CD4-positive, alpha-beta memory T cell (primary cell): ENCODE measurements at regions of chr3 and their contacts with region 1.

Region 1: DNA sequence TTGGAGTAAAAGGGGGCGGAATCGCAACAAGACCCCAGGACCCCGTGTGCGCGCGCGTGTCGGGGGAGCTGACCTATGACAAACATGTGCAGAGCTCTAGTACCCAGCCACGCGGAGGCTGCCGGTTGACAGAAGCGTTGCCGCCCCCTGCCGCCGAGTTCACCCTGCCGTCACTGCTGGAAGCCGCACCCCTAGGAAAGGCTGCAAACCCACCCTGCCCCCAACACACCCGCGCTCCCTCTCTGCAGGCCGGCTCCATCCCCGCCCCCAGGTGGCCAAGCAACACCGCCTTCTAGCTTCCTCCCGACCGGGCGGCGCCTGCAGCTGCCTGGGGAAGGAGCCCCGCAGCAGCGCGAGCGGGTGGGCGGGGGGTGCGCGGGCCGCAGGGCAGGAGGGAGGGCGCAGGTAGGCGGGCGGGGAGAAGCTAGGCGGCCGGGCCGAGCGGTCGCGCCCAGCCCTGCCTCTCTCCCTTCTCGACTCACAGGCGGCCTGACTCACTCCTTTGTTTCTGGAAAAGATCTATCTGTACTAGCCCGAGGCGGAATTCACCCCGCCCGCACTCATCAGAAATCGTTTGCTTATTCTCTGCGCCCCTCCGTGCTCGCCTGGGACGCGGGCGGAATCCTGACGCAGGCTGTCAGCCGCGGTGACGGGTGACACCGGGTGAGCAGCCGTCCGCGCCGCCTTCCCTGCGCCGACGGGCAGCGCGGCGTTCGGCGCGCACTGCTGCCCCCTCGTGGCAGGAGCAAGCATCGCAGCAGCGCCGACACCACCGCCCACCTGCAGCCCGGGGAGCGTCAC is 160.8 kb downstream of the GAP43 start:
- DNase-seq: peak; percentile 91 to 96 (median 93)
- H3K4me3 ChIP-seq: peak overlapping the region in 1 of 2 donors; percentile 81
- H3K4me3 Mint-ChIP-seq: peak overlapping the region; percentile 78 to 96 (median 93)
- H3K27ac ChIP-seq: peak overlapping the region; percentile 90
- H3K27ac Mint-ChIP-seq: peak overlapping the region; percentile 76 to 99 (median 98)
- H3K4me1 ChIP-seq: peaks cover 13% of the 10 kb centered on the region
- H3K4me1 Mint-ChIP-seq: peaks cover 10 to 19% (median 10%) of the 10 kb centered on the region in 4 donors
- H3K27me3 ChIP-seq: no peaks in the 10 kb centered on the region
- H3K27me3 Mint-ChIP-seq: no peaks in the 10 kb centered on the region

Region 2: GRCh38 chr3:114056130-114057010 is 1727.8 kb before region 1 on chr3 and contains the starts of genes CCDC191 and QTRT2:
- CTCF ChIA-PET with region 1: no interaction called
- POLR2A ChIA-PET with region 1: interaction called, 3 read pairs
- intact Hi-C with region 1: loop called (anchors 10 kb)
- DNase-seq: peak; percentile 97 to 99 (median 98)
- H3K4me3 ChIP-seq: peak within 1 kb of the TSS; percentile 78 to 93
- H3K4me3 Mint-ChIP-seq: peak within 1 kb of the TSS; percentile 95 to 100 (median 99)
- H3K27ac ChIP-seq: peak within 1 kb of the TSS; percentile 86
- H3K27ac Mint-ChIP-seq: peak within 1 kb of the TSS; percentile 93 to 100 (median 99)
- H3K4me1 ChIP-seq: peaks cover 26% of the 10 kb centered on the region
- H3K4me1 Mint-ChIP-seq: peaks cover 21 to 57% (median 38%) of the 10 kb centered on the region in 4 donors
- H3K27me3 ChIP-seq: no peaks in the 10 kb centered on the region
- H3K27me3 Mint-ChIP-seq: peaks cover 0 to 2% of the 10 kb centered on the region in 2 donors
- total RNA-seq, gene CCDC191: 5.7 to 7.1 TPM
- total RNA-seq, gene QTRT2: 29.4 to 35.7 TPM

Region 3: DNA sequence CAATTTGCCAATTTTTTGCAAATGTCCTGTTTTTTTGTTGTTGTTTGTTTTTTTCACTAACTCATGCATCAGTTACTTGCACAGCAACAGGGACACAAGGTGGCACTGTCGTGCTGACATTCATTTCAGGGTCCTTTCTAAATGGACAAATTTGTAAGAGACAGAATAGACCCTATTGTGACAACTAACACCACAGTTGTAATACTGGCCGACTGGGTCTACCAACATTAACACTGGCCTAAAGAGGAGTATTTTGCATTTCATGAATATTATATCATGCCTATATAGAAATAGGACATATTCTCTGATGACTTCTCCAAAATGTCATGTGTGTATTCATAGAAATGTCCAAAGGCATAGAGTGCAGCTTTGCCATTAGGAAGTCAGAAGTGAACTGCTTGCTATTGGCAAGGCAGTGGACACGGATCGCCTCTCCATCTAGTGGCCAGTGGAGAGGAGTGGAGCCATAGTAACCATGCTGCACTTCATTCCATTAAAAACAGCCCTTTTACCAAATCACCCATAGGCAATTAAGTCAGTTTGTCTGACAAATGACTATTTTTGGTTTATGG is 691.8 kb before region 1 on chr3:
- CTCF ChIA-PET with region 1: interaction called, 9 read pairs
- POLR2A ChIA-PET with region 1: no interaction called
- intact Hi-C with region 1: loop called (anchors 1 kb)
- DNase-seq: peak; percentile 43 to 62 (median 48)
- H3K4me3 ChIP-seq: no peak overlapping the region
- H3K4me3 Mint-ChIP-seq: no peak overlapping the region
- H3K27ac ChIP-seq: no peak overlapping the region
- H3K27ac Mint-ChIP-seq: no peak overlapping the region
- H3K4me1 ChIP-seq: peaks cover 4% of the 10 kb centered on the region
- H3K4me1 Mint-ChIP-seq: peaks cover 12 to 20% (median 16%) of the 10 kb centered on the region in 4 donors
- H3K27me3 ChIP-seq: no peaks in the 10 kb centered on the region
- H3K27me3 Mint-ChIP-seq: no peaks in the 10 kb centered on the region

Region 4: DNA sequence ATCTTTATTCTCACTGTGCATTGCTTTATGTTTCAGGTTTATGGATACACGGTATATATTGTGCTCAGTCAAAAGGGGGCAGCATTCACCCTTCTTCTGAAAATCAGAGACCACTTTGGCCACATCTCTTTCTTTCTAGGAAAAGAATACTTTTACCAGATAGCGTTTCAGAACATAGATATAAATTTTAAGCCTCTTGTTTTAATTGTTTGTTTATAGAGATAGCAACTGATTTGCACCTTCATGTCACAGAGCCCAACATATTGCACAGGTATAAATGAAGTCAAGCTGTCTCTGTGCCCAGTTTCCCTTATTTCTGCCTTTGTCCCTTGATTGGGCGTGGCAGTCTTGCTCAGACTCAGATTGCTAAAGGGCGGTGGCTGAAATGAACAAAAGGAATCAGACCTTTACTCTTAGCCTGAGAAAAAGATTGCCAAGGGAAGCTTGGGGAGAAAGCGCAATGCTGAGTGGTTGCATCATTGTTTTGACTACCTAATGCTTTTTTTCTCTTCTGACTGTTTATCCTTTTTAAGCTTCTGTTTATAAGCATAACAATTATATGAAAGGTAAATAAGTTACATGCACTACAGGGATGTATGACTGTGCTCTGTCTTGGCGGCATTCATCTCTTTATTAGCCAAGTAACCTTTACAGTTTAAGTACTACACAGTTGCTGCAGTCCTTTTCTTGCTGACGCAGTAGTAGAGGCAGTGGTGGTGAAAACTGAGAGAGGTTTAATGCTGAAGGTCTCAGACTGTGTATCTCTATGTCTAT is 566.3 kb before region 1 on chr3:
- CTCF ChIA-PET with region 1: interaction called, 11 read pairs
- POLR2A ChIA-PET with region 1: no interaction called
- intact Hi-C with region 1: loop called (anchors 1 kb)
- DNase-seq: peak in 4 of 5 donors; percentile 5 to 21 (median 13)
- H3K4me3 ChIP-seq: no peak overlapping the region
- H3K4me3 Mint-ChIP-seq: no peak overlapping the region
- H3K27ac ChIP-seq: no peak overlapping the region
- H3K27ac Mint-ChIP-seq: peak overlapping the region in 1 of 7 donors; percentile 15
- H3K4me1 ChIP-seq: no peaks in the 10 kb centered on the region
- H3K4me1 Mint-ChIP-seq: no peaks in the 10 kb centered on the region
- H3K27me3 ChIP-seq: no peaks in the 10 kb centered on the region
- H3K27me3 Mint-ChIP-seq: peaks cover 3 to 6% of the 10 kb centered on the region in 2 donors

Region 5: DNA sequence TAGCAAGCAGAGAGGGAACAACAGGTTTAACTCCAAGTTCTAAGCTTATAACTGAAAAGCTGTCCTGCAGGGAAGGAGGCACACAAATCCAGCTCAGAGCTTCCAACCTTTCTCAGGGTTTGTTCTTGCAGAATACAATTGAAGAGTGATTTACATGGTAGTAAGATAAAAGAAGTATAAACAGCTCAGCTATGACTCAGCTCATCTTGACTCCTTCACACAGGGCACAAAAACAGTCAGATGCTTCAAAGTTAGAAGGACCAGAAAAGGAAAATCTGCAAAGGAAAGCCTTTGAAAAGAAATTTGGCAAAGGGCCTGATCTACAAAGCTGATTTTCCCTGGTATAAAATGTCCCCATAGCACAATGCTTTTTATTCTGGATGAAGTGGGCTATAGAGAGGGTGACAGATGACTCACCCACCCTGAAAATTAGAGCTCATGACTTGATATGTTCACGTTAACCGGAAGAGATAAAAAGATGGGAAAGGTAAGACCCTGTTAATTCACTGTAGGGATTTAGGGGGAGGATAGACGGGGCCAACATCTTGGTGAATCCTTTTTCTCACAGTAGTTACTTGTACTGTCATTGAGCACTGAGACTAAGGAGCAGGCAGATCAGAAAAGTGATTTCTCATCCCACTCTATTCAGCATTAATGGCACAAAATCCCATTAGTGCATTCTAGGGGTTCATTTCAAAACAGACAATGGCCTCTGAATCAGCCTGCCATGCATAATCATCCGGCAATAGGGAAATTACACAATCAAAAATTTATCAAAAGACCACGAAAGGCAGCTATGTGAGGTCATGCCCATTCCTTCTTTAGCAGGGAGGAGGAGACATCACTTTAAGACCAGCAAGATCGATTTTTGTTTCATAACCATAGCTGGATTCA is 17.3 kb before region 1 on chr3:
- CTCF ChIA-PET with region 1: interaction called, 10 read pairs
- POLR2A ChIA-PET with region 1: no interaction called
- intact Hi-C with region 1: no loop called
- DNase-seq: no peak
- H3K4me3 ChIP-seq: no peak overlapping the region
- H3K4me3 Mint-ChIP-seq: no peak overlapping the region
- H3K27ac ChIP-seq: no peak overlapping the region
- H3K27ac Mint-ChIP-seq: no peak overlapping the region
- H3K4me1 ChIP-seq: no peaks in the 10 kb centered on the region
- H3K4me1 Mint-ChIP-seq: no peaks in the 10 kb centered on the region
- H3K27me3 ChIP-seq: no peaks in the 10 kb centered on the region
- H3K27me3 Mint-ChIP-seq: no peaks in the 10 kb centered on the region

Region 6: GRCh38 chr3:115819785-115820384 is 35.7 kb after region 1 on chr3:
- CTCF ChIA-PET with region 1: interaction called, 11 read pairs
- POLR2A ChIA-PET with region 1: interaction called, 5 read pairs
- intact Hi-C with region 1: loop called (anchors 1 kb)
- DNase-seq: peak; percentile 63 to 70 (median 65)
- H3K4me3 ChIP-seq: no peak overlapping the region
- H3K4me3 Mint-ChIP-seq: no peak overlapping the region
- H3K27ac ChIP-seq: no peak overlapping the region
- H3K27ac Mint-ChIP-seq: no peak overlapping the region
- H3K4me1 ChIP-seq: no peaks in the 10 kb centered on the region
- H3K4me1 Mint-ChIP-seq: no peaks in the 10 kb centered on the region
- H3K27me3 ChIP-seq: no peaks in the 10 kb centered on the region
- H3K27me3 Mint-ChIP-seq: peaks cover 0 to 2% of the 10 kb centered on the region in 2 donors

Region 7: GRCh38 chr3:115855911-115856310 is 71.8 kb after region 1 on chr3:
- CTCF ChIA-PET with region 1: no interaction called
- POLR2A ChIA-PET with region 1: no interaction called
- intact Hi-C with region 1: no loop called
- DNase-seq: no peak
- H3K4me3 ChIP-seq: no peak overlapping the region
- H3K4me3 Mint-ChIP-seq: no peak overlapping the region
- H3K27ac ChIP-seq: no peak overlapping the region
- H3K27ac Mint-ChIP-seq: no peak overlapping the region
- H3K4me1 ChIP-seq: no peaks in the 10 kb centered on the region
- H3K4me1 Mint-ChIP-seq: no peaks in the 10 kb centered on the region
- H3K27me3 ChIP-seq: no peaks in the 10 kb centered on the region
- H3K27me3 Mint-ChIP-seq: peaks cover 22 to 24% of the 10 kb centered on the region in 2 donors

Region 8: GRCh38 chr3:115986555-115987207 is 202.5 kb after region 1 on chr3:
- CTCF ChIA-PET with region 1: no interaction called
- POLR2A ChIA-PET with region 1: no interaction called
- intact Hi-C with region 1: no loop called
- DNase-seq: no peak
- H3K4me3 ChIP-seq: no peak overlapping the region
- H3K4me3 Mint-ChIP-seq: no peak overlapping the region
- H3K27ac ChIP-seq: no peak overlapping the region
- H3K27ac Mint-ChIP-seq: no peak overlapping the region
- H3K4me1 ChIP-seq: no peaks in the 10 kb centered on the region
- H3K4me1 Mint-ChIP-seq: no peaks in the 10 kb centered on the region
- H3K27me3 ChIP-seq: no peaks in the 10 kb centered on the region
- H3K27me3 Mint-ChIP-seq: peaks cover 0 to 3% of the 10 kb centered on the region in 2 donors